ENCODE measurements at regions of chr12 and their contacts with region 1.

Region 1: GRCh38 chr12:117367011-117367638 is 5.7 kb upstream of the NOS1 start:
- DNase-seq: peak; percentile 49
- ATAC-seq: peak; percentile 82

Region 2: GRCh38 chr12:117587631-117588287 is 220.6 kb after region 1 on chr12:
- intact Hi-C with region 1: loop called (anchors 2 kb)
- DNase-seq: peak; percentile 62
- ATAC-seq: peak; percentile 77

Measured in Right ventricle myocardium superior (tissue), 1 donor.